IMR-90 (cell line): ENCODE measurements at regions of chr6 and their contacts with region 1.

Region 1: DNA sequence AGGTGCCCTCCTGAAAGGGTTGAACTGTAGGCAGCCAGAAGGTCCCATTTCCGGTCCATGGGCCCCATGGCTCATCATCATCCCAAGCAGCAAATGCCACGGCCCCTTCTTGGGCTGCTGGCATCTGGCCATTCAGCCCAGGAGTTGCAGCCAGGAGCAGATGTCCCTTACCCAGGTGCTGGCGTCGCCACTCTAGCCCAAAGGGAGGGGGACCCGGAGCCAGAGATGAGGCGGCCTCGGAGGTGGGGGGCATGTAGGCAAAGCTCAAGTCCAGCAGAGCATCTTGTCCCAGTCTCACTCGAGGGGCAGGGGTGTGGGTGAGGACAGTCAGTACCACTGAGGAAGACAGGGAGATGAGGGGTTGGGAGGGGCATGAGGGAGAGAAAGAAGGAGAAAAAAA is 6.3 kb upstream of the RGL2 start:
- DNase-seq: no peak
- ATAC-seq: no peak
- H3K4me3 ChIP-seq: no peak overlapping the region
- H3K27ac ChIP-seq: no peak overlapping the region
- H3K4me1 ChIP-seq: no peaks in the 10 kb centered on the region
- H3K27me3 ChIP-seq: no peaks in the 10 kb centered on the region
- CTCF ChIP-seq: no peak
- POLR2A ChIP-seq: no peak
- RAD21 ChIP-seq: no peak

Region 2: DNA sequence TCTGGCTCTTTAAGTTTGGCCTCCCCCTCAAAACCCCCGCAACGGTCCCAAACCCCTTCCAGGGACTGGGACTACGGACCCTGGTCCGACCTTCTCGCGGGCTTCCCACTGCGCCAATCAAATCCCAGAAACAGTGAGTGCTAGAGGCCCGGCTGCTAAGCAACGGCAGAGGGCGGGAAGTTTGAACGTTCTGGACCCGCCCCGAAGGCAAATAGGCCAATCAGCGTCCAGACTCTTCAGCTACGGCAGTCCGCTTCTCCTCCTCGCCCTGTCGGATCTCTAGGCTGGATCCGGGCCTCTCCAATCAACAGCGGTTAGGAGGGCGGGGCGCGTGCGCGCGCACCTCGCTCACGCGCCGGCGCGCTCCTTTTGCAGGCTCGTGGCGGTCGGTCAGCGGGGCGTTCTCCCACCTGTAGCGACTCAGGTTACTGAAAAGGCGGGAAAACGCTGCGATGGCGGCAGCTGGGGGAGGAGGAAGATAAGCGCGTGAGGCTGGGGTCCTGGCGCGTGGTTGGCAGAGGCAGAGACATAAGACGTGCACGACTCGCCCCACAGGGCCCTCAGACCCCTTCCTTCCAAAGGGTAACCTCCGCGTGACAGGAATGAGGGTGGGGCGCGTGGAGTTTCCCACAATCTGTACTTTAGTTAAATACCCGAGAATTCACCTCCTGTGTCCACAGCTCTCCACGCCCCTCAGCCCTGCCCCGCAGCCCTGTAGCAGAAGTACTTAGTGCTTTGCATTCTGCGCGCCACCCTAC is 1565.2 kb before region 1 on chr6 and contains the start of gene MSH5:
- CTCF ChIA-PET with region 1: no interaction called
- POLR2A ChIA-PET with region 1: interaction called, 15 read pairs
- dilution Hi-C with region 1: no loop called
- in situ Hi-C with region 1: no loop called
- intact Hi-C with region 1: no loop called
- DNase-seq: peak; percentile 99
- ATAC-seq: peak; percentile 88
- H3K4me3 ChIP-seq: peak within 1 kb of the TSS; percentile 73
- H3K27ac ChIP-seq: peak within 1 kb of the TSS; percentile 68; the same call in 1 of the 2 replicates
- H3K4me1 ChIP-seq: peaks cover 13% of the 10 kb centered on the region
- H3K27me3 ChIP-seq: no peaks in the 10 kb centered on the region
- CTCF ChIP-seq: no peak
- POLR2A ChIP-seq: no peak
- RAD21 ChIP-seq: no peak
- total RNA-seq, gene MSH5: 4.7 and 5.6 TPM in 2 replicates